ENCODE measurements at regions of chr22 and their contacts with region 1.

Region 1: DNA sequence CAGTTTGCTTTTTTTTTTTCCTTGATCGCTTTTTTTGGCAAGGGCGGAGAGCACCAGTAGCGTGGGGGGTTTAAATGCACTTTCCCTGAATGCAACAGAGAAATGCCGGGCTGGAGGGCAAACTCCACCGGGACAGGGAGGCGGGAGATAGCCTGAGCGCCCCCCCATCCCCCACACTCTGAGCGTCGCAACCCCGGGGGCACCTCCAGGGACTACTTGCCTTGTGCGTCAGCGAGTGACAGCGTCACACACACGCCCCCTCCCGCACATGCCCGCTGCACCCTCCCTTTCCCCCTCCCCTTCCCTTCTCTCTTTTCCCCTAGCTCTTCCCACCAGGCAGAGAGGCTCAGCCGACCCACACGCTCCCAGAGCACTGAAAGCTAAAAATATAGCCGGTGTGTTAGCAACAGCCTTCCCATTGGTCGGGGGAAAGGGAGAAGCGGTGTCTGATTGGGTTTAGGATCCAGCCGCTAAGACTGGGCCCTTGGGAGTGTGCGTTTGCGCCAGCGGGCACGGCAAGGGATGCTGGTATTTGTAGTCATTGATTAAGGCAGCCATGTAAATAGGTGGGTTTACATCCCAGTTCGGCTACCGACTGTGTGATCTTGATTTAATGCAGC is 1.7 kb upstream of the TOB2 start:
- DNase-seq: peak; percentile 72 to 95 (median 90)
- ATAC-seq: peak; percentile 69 to 77
- H3K4me3 Mint-ChIP-seq: peak overlapping the region; percentile 88 to 100 (median 94)
- H3K27ac Mint-ChIP-seq: peak overlapping the region; percentile 95 to 100 (median 97)
- H3K4me1 Mint-ChIP-seq: peaks cover 20 to 30% (median 21%) of the 10 kb centered on the region in 4 donors
- H3K27me3 Mint-ChIP-seq: no peaks in the 10 kb centered on the region

Region 2: GRCh38 chr22:41240377-41241132 is 207.7 kb before region 1 on chr22 and contains the start of gene CHADL:
- POLR2A ChIA-PET with region 1: no interaction called
- DNase-seq: no peak
- ATAC-seq: no peak
- H3K4me3 Mint-ChIP-seq: peak within 1 kb of the TSS in 1 of 10 donors; percentile 35
- H3K27ac Mint-ChIP-seq: peak within 1 kb of the TSS in 5 of 10 donors; percentile 38 to 86 (median 53)
- H3K4me1 Mint-ChIP-seq: peaks cover 3 to 17% (median 5%) of the 10 kb centered on the region in 4 donors
- H3K27me3 Mint-ChIP-seq: no peaks in the 10 kb centered on the region
- polyA plus RNA-seq, gene CHADL: 0.49 to 1.7 (median 1.3) TPM

Region 3: GRCh38 chr22:41301105-41302020 is 146.9 kb before region 1 on chr22 and contains the start of gene ZC3H7B:
- POLR2A ChIA-PET with region 1: interaction called, 12 read pairs
- DNase-seq: peak; percentile 76 to 90 (median 84)
- ATAC-seq: peak; percentile 97 to 98
- H3K4me3 Mint-ChIP-seq: peak within 1 kb of the TSS; percentile 76 to 93 (median 84)
- H3K27ac Mint-ChIP-seq: peak within 1 kb of the TSS; percentile 80 to 96 (median 91)
- H3K4me1 Mint-ChIP-seq: peaks cover 19 to 37% (median 33%) of the 10 kb centered on the region in 4 donors
- H3K27me3 Mint-ChIP-seq: no peaks in the 10 kb centered on the region
- polyA plus RNA-seq, gene ZC3H7B: 0.65 to 1.5 (median 1.2) TPM

Region 4: GRCh38 chr22:41352051-41352450 is 96.2 kb before region 1 on chr22:
- POLR2A ChIA-PET with region 1: no interaction called
- DNase-seq: no peak
- ATAC-seq: no peak
- H3K4me3 Mint-ChIP-seq: no peak overlapping the region
- H3K27ac Mint-ChIP-seq: no peak overlapping the region
- H3K4me1 Mint-ChIP-seq: peaks cover 0 to 7% (median 0%) of the 10 kb centered on the region in 4 donors
- H3K27me3 Mint-ChIP-seq: no peaks in the 10 kb centered on the region

Region 5: DNA sequence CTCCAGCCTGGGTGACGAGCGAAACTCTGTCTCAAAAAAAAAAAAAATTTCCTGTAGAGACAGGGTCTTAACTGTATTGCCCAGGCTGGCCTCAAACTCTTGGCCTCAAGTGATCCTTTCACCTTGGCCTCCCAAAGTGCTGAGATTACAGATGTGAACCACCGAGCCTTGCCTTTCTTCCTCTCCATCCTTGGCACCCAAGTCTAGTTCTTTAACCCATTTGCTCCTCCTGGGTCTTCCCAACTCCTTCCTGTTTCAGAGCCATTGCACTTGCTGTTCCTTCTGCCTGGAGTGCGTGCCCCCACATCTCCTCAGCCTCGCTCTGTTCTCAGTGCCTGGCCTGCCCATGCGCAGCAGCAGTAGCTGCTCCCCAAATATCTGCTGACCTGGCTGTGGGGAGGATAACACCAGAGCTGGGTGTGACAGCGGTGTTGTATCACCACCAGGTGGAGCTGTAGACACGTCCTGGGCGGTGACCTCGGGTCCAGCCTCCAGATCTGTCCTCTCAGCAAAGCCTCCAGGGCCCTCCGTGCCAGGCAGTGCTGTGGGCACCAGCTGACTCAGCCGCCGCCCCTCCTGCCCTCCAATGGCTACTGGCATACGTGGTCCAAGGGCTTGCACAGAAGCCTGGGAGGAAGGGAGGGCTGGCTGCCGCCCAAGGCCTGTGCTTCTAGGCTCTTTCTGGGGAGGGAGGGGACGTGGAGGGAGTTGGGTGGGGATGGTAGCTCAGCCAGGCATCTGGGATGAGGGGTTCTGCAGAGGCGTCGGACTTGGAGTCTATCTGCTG is 44.6 kb before region 1 on chr22:
- POLR2A ChIA-PET with region 1: interaction called, 11 read pairs
- DNase-seq: peak; percentile 62 to 91 (median 81)
- ATAC-seq: peak; percentile 98 to 99
- H3K4me3 Mint-ChIP-seq: peak overlapping the region in 2 of 10 donors; percentile 14 to 54
- H3K27ac Mint-ChIP-seq: peak overlapping the region in 6 of 10 donors; percentile 41 to 94 (median 64)
- H3K4me1 Mint-ChIP-seq: peaks cover 6 to 15% (median 10%) of the 10 kb centered on the region in 4 donors
- H3K27me3 Mint-ChIP-seq: peaks cover 0 to 1% (median 0%) of the 10 kb centered on the region in 5 donors

Region 6: DNA sequence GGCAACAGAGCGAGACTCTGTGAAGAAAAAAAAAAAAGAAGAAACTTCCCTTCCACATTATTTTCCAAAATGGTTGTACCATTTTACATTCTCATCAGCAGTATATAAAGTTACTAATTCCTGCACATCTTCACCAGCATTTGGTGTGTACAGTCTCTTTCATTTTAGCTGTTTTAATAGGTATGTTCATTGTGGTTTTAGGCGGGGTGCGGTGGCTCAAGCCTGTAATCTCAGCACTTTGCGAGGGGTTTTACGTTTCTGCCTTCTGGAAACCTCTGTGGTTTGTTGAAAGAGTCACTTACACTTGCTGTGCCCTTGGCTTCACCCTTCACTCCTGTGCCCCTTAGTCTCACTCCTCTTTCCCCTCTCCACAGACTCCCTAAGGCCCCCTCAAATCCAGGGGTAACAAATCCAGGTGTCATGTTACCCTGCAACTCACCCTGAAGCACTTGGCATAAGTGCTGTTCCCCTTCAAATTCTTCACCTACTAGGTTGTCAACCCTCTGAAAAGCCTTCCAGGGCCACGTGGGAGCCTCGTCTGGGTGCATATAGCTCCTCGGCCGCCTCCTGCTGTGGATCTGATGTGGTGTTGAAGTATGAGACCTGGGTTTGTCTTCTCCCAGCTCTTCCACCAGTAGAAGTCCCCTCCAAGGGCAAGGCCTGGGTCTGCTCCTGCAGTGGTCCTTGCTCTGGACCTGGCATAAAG is 22.5 kb before region 1 on chr22:
- POLR2A ChIA-PET with region 1: interaction called, 13 read pairs
- DNase-seq: peak in 3 of 10 donors; percentile 20 to 47 (median 36)
- ATAC-seq: peak; percentile 70 to 96
- H3K4me3 Mint-ChIP-seq: peak overlapping the region in 6 of 10 donors; percentile 2 to 59 (median 42)
- H3K27ac Mint-ChIP-seq: peak overlapping the region; percentile 32 to 92 (median 74)
- H3K4me1 Mint-ChIP-seq: peaks cover 11 to 18% (median 15%) of the 10 kb centered on the region in 4 donors
- H3K27me3 Mint-ChIP-seq: no peaks in the 10 kb centered on the region

Region 7: GRCh38 chr22:41468381-41469217 is 20.3 kb after region 1 on chr22 and contains the starts of genes ACO2 and PHF5A:
- POLR2A ChIA-PET with region 1: interaction called, 216 read pairs
- DNase-seq: peak; percentile 91 to 100 (median 98)
- ATAC-seq: peak; percentile 89 to 90
- H3K4me3 Mint-ChIP-seq: peak within 1 kb of the TSS; percentile 89 to 93 (median 92)
- H3K27ac Mint-ChIP-seq: peak within 1 kb of the TSS; percentile 98 to 100 (median 100)
- H3K4me1 Mint-ChIP-seq: peaks cover 17 to 70% (median 54%) of the 10 kb centered on the region in 4 donors
- H3K27me3 Mint-ChIP-seq: no peaks in the 10 kb centered on the region
- polyA plus RNA-seq, gene ACO2: 64.2 to 91.9 (median 72.3) TPM
- polyA plus RNA-seq, gene PHF5A: 17.2 to 21.4 (median 17.9) TPM